AG04449 (cell line): ENCODE measurements at regions of chr17 and their contacts with region 1.

Region 1: GRCh38 chr17:47315451-47316266 is 8.1 kb upstream of the EFCAB13 start:
- DNase-seq: peak; percentile 89
- H3K4me3 ChIP-seq: no peak overlapping the region
- CTCF ChIP-seq: peak; percentile 71

Region 2: GRCh38 chr17:47184681-47185080 is 131.0 kb before region 1 on chr17:
- CTCF ChIA-PET with region 1: interaction called, 10 read pairs
- POLR2A ChIA-PET with region 1: no interaction called
- DNase-seq: no peak
- H3K4me3 ChIP-seq: no peak overlapping the region
- CTCF ChIP-seq: no peak

Region 3: DNA sequence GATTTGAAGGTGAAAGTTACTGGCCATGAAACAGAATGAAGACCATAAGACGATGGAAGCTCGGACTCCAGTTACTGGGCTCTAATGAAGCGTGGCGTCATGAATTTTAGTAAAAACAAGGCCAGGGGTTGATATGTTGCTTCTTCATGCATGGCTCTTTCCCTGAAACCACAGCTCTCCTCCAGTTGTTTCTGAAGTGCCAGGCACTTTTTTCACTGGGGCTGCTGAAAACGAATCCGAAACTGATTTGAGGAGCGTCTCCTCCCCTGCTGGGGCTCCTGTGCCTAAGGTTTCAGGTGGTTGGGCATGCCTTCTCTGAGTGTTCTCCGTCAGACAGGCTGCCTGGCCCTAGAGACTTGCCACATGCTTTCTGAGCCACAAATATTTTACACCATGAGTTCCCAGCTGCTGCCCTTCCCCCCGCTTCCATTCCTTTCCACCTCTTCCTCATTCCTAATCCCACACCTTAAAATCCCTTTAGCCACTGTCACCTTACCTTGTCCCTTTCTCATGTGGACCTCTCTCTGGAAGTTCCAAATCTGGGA is 110.2 kb before region 1 on chr17:
- CTCF ChIA-PET with region 1: interaction called, 18 read pairs
- POLR2A ChIA-PET with region 1: interaction called, 3 read pairs
- DNase-seq: peak; percentile 63
- H3K4me3 ChIP-seq: no peak overlapping the region; the same call in 1 of the 2 replicates
- CTCF ChIP-seq: no peak

Region 4: DNA sequence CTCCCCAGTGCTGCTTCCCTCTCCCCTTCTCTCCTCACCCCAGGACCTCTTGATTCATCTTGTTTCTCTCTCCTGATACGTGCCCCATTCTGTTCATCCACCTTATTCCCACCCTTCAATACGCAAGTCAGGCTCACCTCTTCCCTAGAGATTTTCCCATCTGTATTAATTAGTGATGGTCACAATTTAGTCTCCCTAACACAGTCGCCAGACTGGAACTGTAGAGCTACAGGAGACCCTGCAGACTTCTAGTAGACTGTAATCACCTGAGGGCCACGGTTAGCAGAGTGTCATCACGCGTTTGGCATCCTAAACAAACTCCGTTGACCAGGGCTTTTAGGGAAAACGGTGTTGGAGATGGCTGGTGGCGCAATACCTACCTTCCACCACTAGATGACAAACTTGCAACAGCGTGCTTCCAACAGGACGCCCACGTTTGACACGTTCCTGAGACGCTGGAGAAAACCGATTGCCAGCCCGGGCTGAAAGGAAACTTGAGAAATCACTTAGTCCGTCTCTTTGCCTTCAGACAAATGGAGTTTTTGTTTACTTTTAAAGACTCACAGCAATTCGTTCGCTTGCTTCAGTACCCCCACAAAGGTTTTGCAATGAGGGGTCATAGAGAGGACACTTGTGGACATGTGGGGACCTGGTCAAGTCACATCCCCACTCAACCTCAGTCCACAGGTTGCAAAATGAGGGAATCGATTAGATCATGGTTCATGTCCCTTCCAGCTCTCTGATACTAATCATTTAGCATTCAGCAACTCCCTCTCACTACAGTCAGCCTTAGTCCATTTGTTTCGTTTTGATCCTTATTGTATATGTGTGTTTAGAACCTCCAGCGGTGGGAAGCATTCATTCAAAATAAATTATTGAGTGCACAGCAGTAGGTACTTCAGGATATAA is 85.9 kb before region 1 on chr17:
- CTCF ChIA-PET with region 1: interaction called, 100 read pairs
- POLR2A ChIA-PET with region 1: interaction called, 3 read pairs
- DNase-seq: peak; percentile 79
- H3K4me3 ChIP-seq: peak overlapping the region; percentile 21; the same call in 1 of the 2 replicates
- CTCF ChIP-seq: peak; percentile 96

Region 5: GRCh38 chr17:47239619-47240374 is 75.9 kb before region 1 on chr17:
- CTCF ChIA-PET with region 1: interaction called, 22 read pairs
- POLR2A ChIA-PET with region 1: interaction called, 3 read pairs
- DNase-seq: peak; percentile 96
- H3K4me3 ChIP-seq: no peak overlapping the region
- CTCF ChIP-seq: no peak

Region 6: GRCh38 chr17:47305302-47305923 is 10.2 kb before region 1 on chr17:
- CTCF ChIA-PET with region 1: interaction called, 13 read pairs
- POLR2A ChIA-PET with region 1: interaction called, 4 read pairs
- DNase-seq: peak; percentile 85
- H3K4me3 ChIP-seq: no peak overlapping the region
- CTCF ChIP-seq: no peak

Region 7: DNA sequence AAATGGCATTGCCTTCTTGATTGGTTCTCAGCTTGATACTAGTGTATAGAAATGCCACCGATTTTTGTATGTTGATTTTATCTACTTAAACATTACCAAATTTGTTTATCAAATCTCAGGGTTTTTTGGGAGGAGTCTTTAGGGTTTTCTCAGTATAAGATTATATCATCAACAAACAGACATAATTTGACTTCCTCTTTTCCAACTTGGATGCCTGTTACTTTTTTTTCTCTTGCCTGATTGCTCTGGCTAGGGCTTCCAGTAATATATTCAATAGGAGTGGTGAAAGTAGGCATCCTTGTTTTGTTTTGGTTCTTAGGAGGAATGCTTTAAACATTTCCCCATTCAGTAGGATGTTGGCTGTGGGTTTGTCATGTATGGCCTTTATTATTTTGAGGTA is 37.2 kb after region 1 on chr17:
- CTCF ChIA-PET with region 1: no interaction called
- POLR2A ChIA-PET with region 1: no interaction called
- DNase-seq: no peak
- H3K4me3 ChIP-seq: no peak overlapping the region
- CTCF ChIP-seq: no peak